ENCODE measurements at regions of chr17 and their contacts with region 1.

Region 1: DNA sequence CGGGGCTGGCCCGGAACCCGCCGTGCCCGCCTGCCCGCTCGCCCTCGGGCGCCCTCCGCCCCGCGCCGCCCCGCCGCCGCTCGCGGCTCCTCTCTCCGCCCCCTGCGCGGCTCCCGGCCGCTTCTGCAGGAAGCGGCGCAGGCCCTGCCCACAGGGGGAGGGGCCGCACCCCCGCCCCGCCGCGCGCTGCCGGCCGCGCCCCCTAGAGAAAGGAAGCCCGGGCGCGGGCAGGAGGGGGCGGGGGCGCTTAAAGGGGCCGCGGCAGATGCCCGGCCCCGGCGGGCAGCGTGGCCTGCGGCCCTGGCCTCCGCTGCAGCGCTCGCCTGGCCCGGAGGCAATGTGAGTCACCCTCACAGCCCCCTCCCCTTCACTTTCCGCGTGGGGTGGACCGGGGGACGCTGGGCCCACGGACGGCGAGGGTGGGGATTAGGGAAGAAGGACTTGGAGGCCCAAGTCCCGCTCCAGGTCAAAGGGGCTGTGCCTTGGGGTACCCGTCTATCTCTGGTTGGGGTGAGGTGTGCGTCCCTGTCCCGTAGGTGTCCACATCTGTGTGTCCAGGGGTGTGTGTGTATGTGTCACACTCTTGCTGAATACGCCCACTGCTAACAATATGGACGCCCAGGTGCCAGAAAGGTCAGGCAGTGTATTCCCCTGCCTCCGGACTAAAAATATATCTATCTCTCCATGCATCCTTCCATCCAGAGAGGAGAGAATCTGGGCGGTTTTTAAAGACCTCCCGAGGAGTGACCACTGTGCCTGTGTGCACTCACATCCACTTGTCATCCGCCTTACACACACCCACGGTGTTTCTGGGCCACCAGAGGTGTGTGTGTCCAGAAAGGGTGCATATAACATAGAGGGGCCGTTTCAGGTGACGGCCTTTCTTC is at the start of gene GIT1:
- DNase-seq: peak; percentile 80 to 88 (median 82)
- H3K4me3 ChIP-seq: peak within 1 kb of the TSS; percentile 88
- H3K4me3 Mint-ChIP-seq: peak within 1 kb of the TSS; percentile 89 to 95 (median 93)
- H3K27ac ChIP-seq: peak within 1 kb of the TSS; percentile 59
- H3K27ac Mint-ChIP-seq: peak within 1 kb of the TSS in 7 of 8 donors; percentile 83 to 97 (median 95)
- H3K4me1 ChIP-seq: peaks cover 76% of the 10 kb centered on the region
- H3K4me1 Mint-ChIP-seq: peaks cover 57 to 78% (median 68%) of the 10 kb centered on the region in 3 donors
- H3K27me3 ChIP-seq: no peaks in the 10 kb centered on the region
- H3K27me3 Mint-ChIP-seq: no peaks in the 10 kb centered on the region
- total RNA-seq, gene GIT1: 69.7 to 69.8 TPM

Region 2: GRCh38 chr17:29549177-29549923 is 40.4 kb before region 1 on chr17:
- CTCF ChIA-PET with region 1: no interaction called
- POLR2A ChIA-PET with region 1: no interaction called
- DNase-seq: no peak
- H3K4me3 ChIP-seq: no peak overlapping the region
- H3K4me3 Mint-ChIP-seq: no peak overlapping the region
- H3K27ac ChIP-seq: no peak overlapping the region
- H3K27ac Mint-ChIP-seq: peak overlapping the region in 2 of 8 donors; percentile 6 to 36
- H3K4me1 ChIP-seq: peaks cover 4% of the 10 kb centered on the region
- H3K4me1 Mint-ChIP-seq: peaks cover 15 to 25% (median 23%) of the 10 kb centered on the region in 3 donors
- H3K27me3 ChIP-seq: no peaks in the 10 kb centered on the region
- H3K27me3 Mint-ChIP-seq: no peaks in the 10 kb centered on the region

Region 3: GRCh38 chr17:29568331-29569244 is 21.2 kb before region 1 on chr17 and contains the start of gene TP53I13:
- CTCF ChIA-PET with region 1: interaction called, 113 read pairs
- POLR2A ChIA-PET with region 1: interaction called, 9 read pairs
- DNase-seq: peak; percentile 78 to 92 (median 83)
- H3K4me3 ChIP-seq: peak within 1 kb of the TSS; percentile 59
- H3K4me3 Mint-ChIP-seq: peak within 1 kb of the TSS; percentile 91 to 99 (median 97)
- H3K27ac ChIP-seq: peak within 1 kb of the TSS; percentile 63
- H3K27ac Mint-ChIP-seq: peak within 1 kb of the TSS; percentile 81 to 98 (median 94)
- H3K4me1 ChIP-seq: peaks cover 25% of the 10 kb centered on the region
- H3K4me1 Mint-ChIP-seq: peaks cover 31 to 45% (median 38%) of the 10 kb centered on the region in 3 donors
- H3K27me3 ChIP-seq: no peaks in the 10 kb centered on the region
- H3K27me3 Mint-ChIP-seq: no peaks in the 10 kb centered on the region
- total RNA-seq, gene TP53I13: 71.3 to 75.5 TPM

Region 4: GRCh38 chr17:29603109-29603674 is 13.4 kb after region 1 on chr17:
- CTCF ChIA-PET with region 1: interaction called, 436 read pairs
- POLR2A ChIA-PET with region 1: interaction called, 8 read pairs
- DNase-seq: no peak
- H3K4me3 ChIP-seq: no peak overlapping the region
- H3K4me3 Mint-ChIP-seq: no peak overlapping the region
- H3K27ac ChIP-seq: no peak overlapping the region
- H3K27ac Mint-ChIP-seq: no peak overlapping the region
- H3K4me1 ChIP-seq: no peaks in the 10 kb centered on the region
- H3K4me1 Mint-ChIP-seq: no peaks in the 10 kb centered on the region
- H3K27me3 ChIP-seq: no peaks in the 10 kb centered on the region
- H3K27me3 Mint-ChIP-seq: no peaks in the 10 kb centered on the region

Region 5: DNA sequence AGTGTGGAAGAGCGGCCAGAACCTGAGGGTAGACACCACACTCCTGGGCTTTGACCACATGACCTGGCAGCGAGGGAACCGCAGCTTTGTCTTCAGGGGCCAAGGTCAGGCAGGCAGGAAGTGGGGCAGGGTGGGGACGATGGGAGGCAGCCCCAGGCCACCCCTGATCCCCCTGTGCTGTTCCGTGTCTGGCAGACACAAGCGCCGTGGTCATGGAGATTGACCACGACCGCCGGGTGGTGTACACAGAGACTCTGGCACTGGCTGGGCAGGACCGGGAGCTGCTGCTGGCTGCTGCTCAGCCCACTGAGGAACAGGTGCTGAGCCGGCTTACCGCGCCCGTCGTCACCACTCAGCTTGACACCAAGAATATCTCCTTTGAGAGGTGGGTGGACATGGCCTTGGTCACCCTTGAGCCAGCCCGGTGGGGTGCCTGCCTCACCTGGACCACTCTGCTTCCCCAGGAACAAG is 19.2 kb after region 1 on chr17:
- CTCF ChIA-PET with region 1: interaction called, 436 read pairs
- POLR2A ChIA-PET with region 1: interaction called, 7 read pairs
- DNase-seq: no peak
- H3K4me3 ChIP-seq: no peak overlapping the region
- H3K4me3 Mint-ChIP-seq: no peak overlapping the region
- H3K27ac ChIP-seq: no peak overlapping the region
- H3K27ac Mint-ChIP-seq: peak overlapping the region in 1 of 8 donors; percentile 75
- H3K4me1 ChIP-seq: peaks cover 5% of the 10 kb centered on the region
- H3K4me1 Mint-ChIP-seq: peaks cover 3 to 4% (median 3%) of the 10 kb centered on the region in 3 donors
- H3K27me3 ChIP-seq: no peaks in the 10 kb centered on the region
- H3K27me3 Mint-ChIP-seq: no peaks in the 10 kb centered on the region

Measured in CD8-positive, alpha-beta memory T cell (primary cell).